ENCODE measurements at regions of chr5 and their contacts with region 1.

Region 1: DNA sequence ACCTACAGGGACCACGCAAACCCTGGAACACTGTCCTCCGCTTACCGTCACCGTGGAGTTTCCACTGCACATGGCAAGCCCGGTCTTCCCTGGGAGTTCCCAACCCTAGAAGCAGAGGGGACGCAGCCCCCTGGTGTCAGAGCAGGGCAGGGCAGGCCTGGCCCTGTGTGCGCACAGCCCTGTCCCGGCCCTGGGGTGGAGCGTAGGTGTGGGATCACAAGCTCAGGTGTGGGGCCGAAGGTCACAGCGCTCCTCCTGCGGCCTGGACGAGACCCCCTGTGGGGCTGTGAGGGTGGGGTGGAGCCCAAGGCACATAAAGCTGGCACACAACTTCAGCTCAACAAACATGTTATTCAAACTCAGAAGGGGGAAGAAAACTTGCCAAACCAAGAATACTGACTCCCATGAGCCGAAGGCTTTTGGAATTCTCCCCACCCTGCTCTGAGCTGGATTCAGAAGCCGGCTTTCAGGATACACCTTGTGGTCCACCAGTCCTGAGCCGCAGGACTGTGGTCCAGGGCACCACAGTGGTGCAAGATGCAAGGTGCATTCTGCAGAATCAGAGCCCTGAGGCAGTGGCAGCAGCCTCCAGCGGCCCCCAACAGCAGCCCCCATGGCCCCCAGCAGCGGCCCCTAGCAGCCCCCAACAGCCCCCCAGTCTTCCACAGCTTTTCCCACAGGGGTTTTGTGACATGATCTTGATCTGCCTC is 11.8 kb upstream of the EXOC3 start:
- DNase-seq: peak; percentile 50
- H3K4me3 ChIP-seq: no peak overlapping the region
- H3K27ac ChIP-seq: no peak overlapping the region
- H3K4me1 ChIP-seq: no peaks in the 10 kb centered on the region
- CTCF ChIP-seq: peak; percentile 77

Region 2: DNA sequence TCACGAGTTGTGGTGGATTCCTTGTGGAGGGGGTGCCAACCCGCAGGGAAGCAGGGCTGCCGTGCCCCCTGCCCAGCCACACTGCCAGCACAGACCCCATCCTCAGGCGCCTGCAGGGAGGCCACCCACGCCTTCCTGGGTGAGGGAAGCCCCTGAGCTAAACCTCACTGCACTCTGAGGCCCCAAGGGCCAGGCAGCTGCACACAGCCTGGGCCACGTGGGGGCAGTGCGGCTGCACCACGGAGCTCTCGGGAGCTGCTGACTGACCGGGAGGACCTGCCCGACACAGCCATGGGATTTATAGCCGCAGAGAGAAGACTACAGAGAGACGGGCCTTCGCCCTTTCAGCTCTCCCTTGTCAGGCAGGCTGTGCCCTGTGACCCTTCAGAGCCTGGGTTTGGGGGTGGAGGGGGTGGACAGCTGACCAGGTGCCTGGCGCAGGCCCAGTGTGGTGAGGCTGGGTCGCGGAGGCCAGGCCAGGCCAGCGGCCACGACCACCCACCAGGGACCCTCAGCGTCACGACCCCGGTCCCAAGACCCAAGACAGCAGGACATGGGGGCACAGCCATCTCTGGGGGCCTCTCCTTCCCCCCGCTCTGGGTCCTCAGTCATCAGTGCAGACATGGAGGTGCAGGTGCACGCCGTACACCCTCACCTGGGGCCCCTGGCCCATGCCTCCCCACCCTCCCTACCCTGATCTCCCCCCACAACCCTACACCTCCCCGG is 113.9 kb before region 1 on chr5:
- CTCF ChIA-PET with region 1: no interaction called
- POLR2A ChIA-PET with region 1: no interaction called
- intact Hi-C with region 1: loop called (anchors 1 kb)
- DNase-seq: peak; percentile 62
- H3K4me3 ChIP-seq: no peak overlapping the region
- H3K27ac ChIP-seq: no peak overlapping the region
- H3K4me1 ChIP-seq: no peaks in the 10 kb centered on the region
- CTCF ChIP-seq: peak; percentile 70

Measured in OCI-LY7 (cell line).